Activated T-helper 2 cell treated with anti-CD3 and anti-CD28 coated beads, Interferon-gamma antibody, Interleukin-2, Interleukin-4, amounts not matched to agents 10 μg/mL and 5 μg/mL and 100 μg/mL, durations not matched to agents 14 hours and 24 hours and 36 hours (primary cell): ENCODE measurements at regions of chr2 and their contacts with region 1.

Region 1: DNA sequence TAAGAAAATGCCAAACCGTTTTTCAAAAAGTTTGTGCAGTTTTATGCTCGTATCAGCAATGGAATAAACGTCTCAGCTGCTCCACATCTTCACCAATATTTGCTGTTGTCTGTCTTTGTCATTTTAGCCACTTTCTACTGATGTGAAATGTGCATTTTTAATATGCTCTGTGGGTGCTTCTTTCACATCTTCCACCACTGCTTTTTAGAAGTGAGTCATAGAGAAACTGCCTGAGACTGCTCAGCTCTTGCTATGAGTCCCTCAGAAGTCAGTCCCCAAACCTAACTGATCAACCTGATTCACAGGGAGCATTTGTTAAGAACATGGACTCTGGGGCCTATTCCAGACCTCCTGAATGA is 41.0 kb upstream of the EPC2 start:
- DNase-seq: peak; percentile 28
- H3K4me3 Mint-ChIP-seq: no peak overlapping the region
- H3K27ac Mint-ChIP-seq: peak overlapping the region; percentile 95
- H3K4me1 Mint-ChIP-seq: peaks cover 28% of the 10 kb centered on the region
- H3K27me3 Mint-ChIP-seq: peaks cover 4% of the 10 kb centered on the region

Region 2: GRCh38 chr2:148552675-148553331 is 50.7 kb before region 1 on chr2:
- intact Hi-C with region 1: loop called (anchors 2 kb)
- DNase-seq: peak; percentile 40
- H3K4me3 Mint-ChIP-seq: no peak overlapping the region
- H3K27ac Mint-ChIP-seq: no peak overlapping the region
- H3K4me1 Mint-ChIP-seq: peaks cover 5% of the 10 kb centered on the region
- H3K27me3 Mint-ChIP-seq: no peaks in the 10 kb centered on the region

Region 3: GRCh38 chr2:148614322-148615049 is 10.9 kb after region 1 on chr2:
- intact Hi-C with region 1: loop called (anchors 1 kb)
- DNase-seq: no peak
- H3K4me3 Mint-ChIP-seq: no peak overlapping the region
- H3K27ac Mint-ChIP-seq: peak overlapping the region; percentile 67
- H3K4me1 Mint-ChIP-seq: peaks cover 14% of the 10 kb centered on the region
- H3K27me3 Mint-ChIP-seq: no peaks in the 10 kb centered on the region

Region 4: DNA sequence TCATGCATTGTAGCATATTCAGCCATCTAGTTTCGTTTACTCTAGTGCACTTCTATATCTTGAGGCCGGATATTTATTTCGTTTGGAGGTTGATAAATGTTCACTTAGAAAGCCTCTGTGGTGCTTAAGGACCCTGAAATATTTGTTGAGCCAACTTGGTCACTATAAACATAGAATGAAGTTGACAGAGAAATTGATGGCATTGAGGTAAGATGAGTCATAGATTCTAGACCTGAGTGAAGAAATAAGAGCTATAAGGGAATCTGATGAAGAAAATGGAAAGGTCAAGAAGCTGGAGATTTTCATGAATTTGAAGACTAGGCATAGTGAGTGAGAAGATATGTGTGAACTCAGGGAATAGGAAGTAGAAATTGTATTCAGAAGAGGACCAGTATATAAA is 76.9 kb after region 1 on chr2:
- intact Hi-C with region 1: no loop called
- DNase-seq: no peak
- H3K4me3 Mint-ChIP-seq: no peak overlapping the region
- H3K27ac Mint-ChIP-seq: no peak overlapping the region
- H3K4me1 Mint-ChIP-seq: peaks cover 24% of the 10 kb centered on the region
- H3K27me3 Mint-ChIP-seq: no peaks in the 10 kb centered on the region

Region 5: GRCh38 chr2:148813603-148814065 is 210.1 kb after region 1 on chr2:
- intact Hi-C with region 1: loop called (anchors 1 kb)
- DNase-seq: peak; percentile 41
- H3K4me3 Mint-ChIP-seq: no peak overlapping the region
- H3K27ac Mint-ChIP-seq: peak overlapping the region; percentile 8
- H3K4me1 Mint-ChIP-seq: peaks cover 20% of the 10 kb centered on the region
- H3K27me3 Mint-ChIP-seq: peaks cover 16% of the 10 kb centered on the region